OCI-LY7 (cell line): ENCODE measurements at regions of chr14 and their contacts with region 1.

Region 1: GRCh38 chr14:49959822-49960408 is 67.0 kb downstream of the ARF6 start:
- DNase-seq: peak; percentile 96
- H3K4me3 ChIP-seq: peak overlapping the region; percentile 54
- H3K27ac ChIP-seq: peak overlapping the region; percentile 95
- H3K4me1 ChIP-seq: peaks cover 81% of the 10 kb centered on the region
- CTCF ChIP-seq: no peak

Region 2: GRCh38 chr14:49892636-49893308 is 67.1 kb before region 1 on chr14 and contains the start of gene ARF6:
- CTCF ChIA-PET with region 1: no interaction called
- POLR2A ChIA-PET with region 1: interaction called, 4 read pairs
- intact Hi-C with region 1: loop called (anchors 1 kb)
- DNase-seq: peak; percentile 99
- H3K4me3 ChIP-seq: peak within 1 kb of the TSS; percentile 98
- H3K27ac ChIP-seq: peak within 1 kb of the TSS; percentile 91
- H3K4me1 ChIP-seq: peaks cover 26% of the 10 kb centered on the region
- CTCF ChIP-seq: no peak
- total RNA-seq, gene ARF6: 47.6 and 51.0 TPM in 2 replicates

Region 3: GRCh38 chr14:49940808-49941421 is 19.0 kb before region 1 on chr14:
- CTCF ChIA-PET with region 1: no interaction called
- POLR2A ChIA-PET with region 1: interaction called, 27 read pairs
- intact Hi-C with region 1: no loop called
- DNase-seq: peak; percentile 66
- H3K4me3 ChIP-seq: peak overlapping the region; percentile 16
- H3K27ac ChIP-seq: peak overlapping the region; percentile 55
- H3K4me1 ChIP-seq: peaks cover 25% of the 10 kb centered on the region
- CTCF ChIP-seq: no peak

Region 4: GRCh38 chr14:49971156-49972130 is 11.5 kb after region 1 on chr14:
- CTCF ChIA-PET with region 1: interaction called, 8 read pairs
- POLR2A ChIA-PET with region 1: interaction called, 78 read pairs
- intact Hi-C with region 1: loop called (anchors 1 kb)
- DNase-seq: peak; percentile 97
- H3K4me3 ChIP-seq: peak overlapping the region; percentile 65
- H3K27ac ChIP-seq: peak overlapping the region; percentile 99
- H3K4me1 ChIP-seq: peaks cover 81% of the 10 kb centered on the region
- CTCF ChIP-seq: no peak